IMR-90 (cell line): ENCODE measurements at regions of chr12 and their contacts with region 1.

Region 1: GRCh38 chr12:46661110-46661845 is 164.5 kb downstream of the SLC38A4 start:
- DNase-seq: peak; percentile 95
- ATAC-seq: peak; percentile 76
- H3K4me3 ChIP-seq: peak overlapping the region; percentile 14; the same call in 1 of the 2 replicates
- H3K27ac ChIP-seq: peak overlapping the region; percentile 93
- H3K4me1 ChIP-seq: peaks cover 29% of the 10 kb centered on the region
- H3K27me3 ChIP-seq: no peaks in the 10 kb centered on the region
- CTCF ChIP-seq: peak; percentile 87
- POLR2A ChIP-seq: peak; percentile 32; the same call in 1 of the 2 replicates
- RAD21 ChIP-seq: peak; percentile 84

Region 2: GRCh38 chr12:46124848-46125619 is 536.2 kb before region 1 on chr12:
- CTCF ChIA-PET with region 1: interaction called, 3 read pairs
- POLR2A ChIA-PET with region 1: interaction called, 15 read pairs
- dilution Hi-C with region 1: no loop called
- in situ Hi-C with region 1: no loop called
- intact Hi-C with region 1: no loop called
- DNase-seq: peak; percentile 87
- ATAC-seq: peak; percentile 95
- H3K4me3 ChIP-seq: no peak overlapping the region
- H3K27ac ChIP-seq: no peak overlapping the region
- H3K4me1 ChIP-seq: peaks cover 5% of the 10 kb centered on the region
- H3K27me3 ChIP-seq: peaks cover 11% of the 10 kb centered on the region
- CTCF ChIP-seq: peak; percentile 75
- POLR2A ChIP-seq: no peak
- RAD21 ChIP-seq: peak; percentile 68

Region 3: DNA sequence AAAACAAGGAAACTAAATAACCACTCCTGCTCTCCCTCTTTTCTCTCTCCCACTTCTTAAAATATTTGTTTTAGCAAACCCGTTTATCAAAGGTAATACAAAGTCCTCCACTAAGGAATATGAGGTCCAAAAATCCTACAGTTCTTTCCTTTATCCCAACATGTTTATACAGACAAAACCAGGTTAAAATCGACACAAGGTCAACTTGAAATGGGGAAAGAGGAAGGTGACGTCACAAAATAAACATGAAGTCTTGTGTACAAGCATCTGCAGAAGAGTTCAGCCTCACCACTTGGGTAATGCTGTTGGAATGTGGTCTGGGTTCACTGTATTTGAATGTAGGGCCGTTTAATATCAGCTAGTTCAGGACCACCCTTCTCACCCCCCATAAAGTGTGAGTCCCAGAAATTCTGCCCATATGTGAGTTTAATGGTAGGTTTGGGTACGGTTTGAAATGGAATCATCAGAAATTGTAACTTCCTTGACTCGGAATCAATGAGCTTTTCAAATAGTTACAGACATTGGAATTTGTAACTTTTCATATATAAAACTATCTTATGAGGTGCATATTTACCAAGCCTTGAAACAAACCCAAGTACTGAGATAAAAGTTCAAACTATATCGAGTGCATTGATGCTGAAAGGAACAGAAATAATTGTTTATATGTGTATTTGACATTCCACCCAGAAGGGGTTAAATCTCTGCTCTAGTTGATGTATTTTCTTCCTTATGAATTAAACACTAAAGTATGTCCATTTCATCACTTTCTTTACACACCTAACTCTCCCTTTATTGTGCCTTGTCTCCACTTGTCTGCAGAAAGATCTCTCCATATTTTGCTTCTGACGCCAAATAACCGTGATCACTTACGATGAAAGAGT is 168.6 kb before region 1 on chr12:
- CTCF ChIA-PET with region 1: no interaction called
- POLR2A ChIA-PET with region 1: no interaction called
- dilution Hi-C with region 1: no loop called
- in situ Hi-C with region 1: no loop called
- intact Hi-C with region 1: loop called (anchors 2 kb)
- DNase-seq: peak; percentile 97
- ATAC-seq: peak; percentile 65
- H3K4me3 ChIP-seq: no peak overlapping the region
- H3K27ac ChIP-seq: peak overlapping the region; percentile 93; the same call in 1 of the 2 replicates
- H3K4me1 ChIP-seq: peaks cover 27% of the 10 kb centered on the region
- H3K27me3 ChIP-seq: no peaks in the 10 kb centered on the region
- CTCF ChIP-seq: no peak
- POLR2A ChIP-seq: no peak
- RAD21 ChIP-seq: no peak

Region 4: DNA sequence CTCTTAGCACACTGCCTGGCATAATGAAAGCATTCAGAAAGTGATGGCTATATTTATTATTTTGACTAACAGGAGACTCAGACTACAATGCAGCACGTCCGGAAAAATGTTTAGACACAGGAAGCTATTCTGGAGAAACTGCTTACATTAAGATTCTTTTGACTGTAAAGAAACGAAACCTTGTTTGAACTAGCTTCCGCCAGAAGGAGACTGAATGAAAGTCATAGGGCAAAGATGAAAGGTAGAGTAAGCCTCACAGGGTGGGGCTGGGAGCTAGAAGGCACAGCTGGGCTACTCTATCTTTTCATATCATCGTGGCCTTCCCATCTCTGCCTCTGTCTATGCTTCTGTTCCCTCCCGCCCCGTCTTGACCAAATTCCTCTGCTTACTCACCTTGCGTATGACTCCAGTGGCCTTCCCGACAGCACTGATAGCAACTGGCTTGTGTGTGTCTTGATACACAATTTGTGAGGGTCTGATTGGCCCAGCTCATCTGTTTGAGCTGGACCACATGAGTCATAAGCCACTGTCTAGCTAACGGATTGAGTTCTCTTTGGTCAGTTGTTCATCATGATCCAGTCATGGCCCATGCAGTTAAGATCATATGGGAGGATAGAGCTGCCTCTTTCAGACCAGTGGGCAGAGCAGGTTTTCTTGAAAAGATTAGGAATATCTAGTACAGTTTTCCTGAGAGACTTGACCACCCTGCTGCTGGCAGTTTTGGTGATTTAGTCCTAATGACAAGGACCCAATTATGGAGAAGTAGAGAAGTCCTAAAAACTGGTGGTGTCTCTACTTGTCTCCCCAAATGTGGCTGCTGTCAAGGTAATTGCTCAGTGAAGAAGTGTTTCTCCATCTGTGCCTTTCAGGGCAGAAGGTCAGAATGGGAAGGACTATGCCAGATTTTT is 137.2 kb before region 1 on chr12:
- CTCF ChIA-PET with region 1: interaction called, 8 read pairs
- POLR2A ChIA-PET with region 1: interaction called, 8 read pairs
- dilution Hi-C with region 1: no loop called
- in situ Hi-C with region 1: no loop called
- intact Hi-C with region 1: loop called (anchors 1 kb)
- DNase-seq: peak; percentile 100
- ATAC-seq: peak; percentile 82
- H3K4me3 ChIP-seq: peak overlapping the region; percentile 47
- H3K27ac ChIP-seq: peak overlapping the region; percentile 94
- H3K4me1 ChIP-seq: peaks cover 25% of the 10 kb centered on the region
- H3K27me3 ChIP-seq: no peaks in the 10 kb centered on the region
- CTCF ChIP-seq: no peak
- POLR2A ChIP-seq: peak; percentile 83
- RAD21 ChIP-seq: peak; percentile 21; the same call in 1 of the 2 replicates